ENCODE measurements at regions of chr9 and their contacts with region 1.

Region 1: DNA sequence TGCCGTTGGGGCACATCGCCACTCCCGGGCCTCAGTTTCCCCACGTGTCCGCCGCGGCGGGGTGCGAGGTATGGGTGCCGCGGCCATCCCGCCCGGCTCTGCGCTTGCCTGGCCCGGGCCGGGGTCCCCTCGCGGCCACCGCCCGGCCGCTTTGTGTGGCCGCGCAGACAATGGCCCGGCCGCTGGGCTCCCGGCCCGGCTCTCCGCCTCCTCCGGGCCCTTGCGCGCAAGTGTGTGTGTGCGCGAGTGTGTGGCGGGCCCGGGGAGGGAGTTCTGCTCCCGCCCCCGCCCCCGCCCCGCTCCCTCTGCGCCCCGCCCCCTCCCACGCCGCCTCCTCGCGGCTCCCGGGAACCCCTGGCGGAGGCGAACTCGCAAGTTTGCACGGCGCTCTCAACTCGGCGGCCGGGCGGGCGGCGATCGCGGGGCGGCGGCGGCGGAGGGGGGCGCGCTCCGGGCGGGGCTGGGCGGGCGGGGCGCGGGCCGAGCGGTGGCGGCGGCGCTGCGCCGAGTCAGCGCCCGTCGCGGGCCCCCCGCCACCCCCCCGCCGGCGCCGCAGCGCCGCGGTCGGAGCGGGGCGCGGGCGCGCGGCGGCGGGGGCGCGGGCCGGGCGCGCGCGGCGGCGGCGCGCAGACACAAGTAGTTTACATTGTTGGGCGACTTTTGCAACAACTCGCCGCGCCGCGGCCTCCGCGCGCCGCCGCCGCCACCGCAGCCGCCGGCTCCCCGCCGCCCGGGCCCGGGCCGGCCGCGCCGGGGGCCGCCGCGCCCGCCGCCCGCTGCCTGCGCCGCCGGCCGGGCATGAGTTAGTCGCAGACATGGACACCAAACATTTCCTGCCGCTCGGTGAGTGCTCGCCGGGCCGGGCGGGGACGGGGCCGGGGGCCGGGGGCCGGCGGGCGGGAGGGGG is at the start of gene RXRA:
- DNase-seq: peak; percentile 88 to 92 (median 90)
- H3K4me3 ChIP-seq: peak within 1 kb of the TSS; percentile 65
- H3K27ac ChIP-seq: peak within 1 kb of the TSS; percentile 80 to 98
- H3K4me1 ChIP-seq: peaks cover 23% of the 10 kb centered on the region
- H3K27me3 ChIP-seq: no peaks in the 10 kb centered on the region
- CTCF ChIP-seq: peak in 1 of 3 donors; percentile 24
- EP300 ChIP-seq: no peak
- POLR2A ChIP-seq: peak; percentile 80
- total RNA-seq, gene RXRA: 23.0 to 82.2 (median 71.8) TPM

Region 2: GRCh38 chr9:134171316-134172197 is 154.5 kb before region 1 on chr9:
- intact Hi-C with region 1: loop called (anchors 5 kb)
- DNase-seq: peak in 4 of 5 donors; percentile 84 to 87 (median 87)
- H3K4me3 ChIP-seq: no peak overlapping the region
- H3K27ac ChIP-seq: peak overlapping the region in 1 of 2 donors; percentile 83
- H3K4me1 ChIP-seq: peaks cover 25% of the 10 kb centered on the region
- H3K27me3 ChIP-seq: no peaks in the 10 kb centered on the region
- CTCF ChIP-seq: no peak
- EP300 ChIP-seq: no peak
- POLR2A ChIP-seq: peak; percentile 17

Region 3: GRCh38 chr9:134434894-134435506 is 108.9 kb after region 1 on chr9:
- intact Hi-C with region 1: loop called in 3 of 4 experiments (anchors 2 to 5 kb)
- DNase-seq: peak; percentile 97 to 99 (median 98)
- H3K4me3 ChIP-seq: peak overlapping the region; percentile 14
- H3K27ac ChIP-seq: peak overlapping the region; percentile 85 to 87
- H3K4me1 ChIP-seq: peaks cover 32% of the 10 kb centered on the region
- H3K27me3 ChIP-seq: no peaks in the 10 kb centered on the region
- CTCF ChIP-seq: no peak
- EP300 ChIP-seq: no peak
- POLR2A ChIP-seq: no peak

Region 4: DNA sequence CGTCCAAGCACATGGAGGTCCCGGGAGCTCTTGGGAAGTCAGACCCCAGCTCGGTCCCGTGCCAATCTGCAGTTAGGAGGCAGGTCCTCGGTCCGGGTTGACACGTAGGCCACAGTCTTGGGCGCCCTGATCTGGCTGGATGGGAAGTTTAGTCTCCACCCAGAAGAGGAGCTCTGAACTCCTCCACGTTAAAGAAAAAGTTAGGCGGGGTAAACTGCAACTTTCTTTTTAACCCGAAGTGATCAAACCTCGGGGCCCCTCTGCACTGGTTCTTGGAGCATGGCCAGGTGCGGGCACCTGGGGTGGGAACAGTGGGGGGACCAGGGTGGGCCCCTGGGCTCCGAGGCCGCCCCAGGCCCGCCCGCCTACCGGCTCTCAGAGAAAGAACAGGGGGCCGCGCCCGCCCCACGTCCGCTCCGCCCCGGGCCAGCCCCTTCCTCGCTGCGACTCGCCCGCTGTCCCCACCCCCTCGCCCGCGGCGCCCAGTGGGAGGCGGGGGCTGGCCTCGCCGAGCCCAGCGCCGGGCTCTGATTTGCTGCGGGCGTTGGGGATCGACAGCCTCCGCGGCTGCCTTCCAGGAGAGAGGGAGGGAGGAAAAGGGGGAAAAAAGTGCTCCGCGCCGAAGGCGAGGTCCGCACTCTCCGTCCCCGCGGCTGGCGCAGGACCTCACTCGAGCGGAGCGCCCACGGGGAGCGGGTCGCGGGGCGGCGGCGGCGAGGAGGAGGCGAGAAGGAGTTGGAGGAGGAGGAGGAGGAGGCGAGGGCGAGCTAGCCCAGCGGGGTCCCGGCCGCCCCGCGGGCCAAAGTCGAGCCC is 315.3 kb after region 1 on chr9 and contains the start of gene COL5A1:
- intact Hi-C with region 1: loop called in 1 of 4 experiments (anchors 10 kb)
- DNase-seq: peak; percentile 92 to 94 (median 93)
- H3K4me3 ChIP-seq: peak within 1 kb of the TSS; percentile 86
- H3K27ac ChIP-seq: peak within 1 kb of the TSS; percentile 64 to 83
- H3K4me1 ChIP-seq: peaks cover 13% of the 10 kb centered on the region
- H3K27me3 ChIP-seq: no peaks in the 10 kb centered on the region
- CTCF ChIP-seq: peak in 2 of 3 donors; percentile 50 to 54
- EP300 ChIP-seq: no peak
- POLR2A ChIP-seq: peak; percentile 85
- total RNA-seq, gene COL5A1: 28.1 to 117 (median 58.6) TPM

Region 5: DNA sequence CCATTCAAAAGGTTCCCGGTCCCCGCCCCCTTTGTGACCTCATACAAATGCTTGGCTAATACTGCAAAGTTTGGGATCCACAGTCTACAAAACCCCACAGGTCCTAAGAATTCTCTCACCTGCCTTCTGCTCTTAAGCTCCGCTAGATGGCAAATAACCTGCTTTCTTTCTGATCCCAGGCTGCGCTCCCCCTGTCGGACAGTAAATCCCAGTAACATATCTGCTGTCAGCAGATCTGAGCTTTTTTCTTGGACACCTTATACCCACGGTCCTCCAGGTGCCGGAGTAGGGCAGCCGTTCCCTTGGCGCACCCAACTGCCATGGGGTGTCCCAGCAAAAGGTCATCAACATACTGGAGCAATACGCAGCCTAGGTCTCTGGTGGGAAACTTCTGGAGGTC is 1114.5 kb after region 1 on chr9:
- intact Hi-C with region 1: loop called in 1 of 4 experiments (anchors 10 kb)
- DNase-seq: peak in 1 of 5 donors; percentile 15
- H3K4me3 ChIP-seq: no peak overlapping the region
- H3K27ac ChIP-seq: peak overlapping the region in 1 of 2 donors; percentile 69
- H3K4me1 ChIP-seq: peaks cover 6% of the 10 kb centered on the region
- H3K27me3 ChIP-seq: no peaks in the 10 kb centered on the region
- CTCF ChIP-seq: no peak
- EP300 ChIP-seq: no peak
- POLR2A ChIP-seq: no peak

Measured in ovary (tissue), 10 donors.